CD8-positive, alpha-beta T cell (primary cell): ENCODE measurements at regions of chr19 and their contacts with region 1.

Region 1: DNA sequence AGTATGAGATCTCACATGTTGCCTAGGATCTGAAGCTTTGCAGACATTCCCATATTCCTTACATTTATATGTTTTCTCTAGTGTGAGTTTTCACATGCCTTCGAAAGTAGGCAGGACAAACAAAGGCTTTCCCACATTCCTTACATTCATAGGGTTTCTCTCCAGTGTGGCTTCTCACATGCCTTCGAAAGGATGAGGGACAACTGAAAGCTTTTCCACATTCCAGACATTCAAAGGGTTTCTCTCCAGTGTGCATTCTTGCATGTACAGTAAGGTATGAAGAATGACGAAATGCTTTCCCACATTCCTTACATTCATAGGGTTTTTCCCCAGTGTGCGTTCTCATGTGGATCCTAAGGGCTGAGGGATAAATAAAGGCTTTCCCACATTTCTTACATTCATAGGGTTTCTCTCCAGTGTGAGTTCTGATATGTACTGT is 14.2 kb downstream of the ZNF699 start:
- DNase-seq: no peak
- ATAC-seq: no peak
- H3K4me3 ChIP-seq: peak overlapping the region in 1 of 2 experiments; percentile 18
- H3K4me3 Mint-ChIP-seq: no peak overlapping the region
- H3K27ac ChIP-seq: no peak overlapping the region
- H3K27ac Mint-ChIP-seq: no peak overlapping the region
- H3K4me1 ChIP-seq: no peaks in the 10 kb centered on the region
- H3K4me1 Mint-ChIP-seq: peaks cover 7% of the 10 kb centered on the region
- H3K27me3 ChIP-seq: no peaks in the 10 kb centered on the region
- H3K27me3 Mint-ChIP-seq: no peaks in the 10 kb centered on the region
- CTCF ChIP-seq: no peak

Region 2: DNA sequence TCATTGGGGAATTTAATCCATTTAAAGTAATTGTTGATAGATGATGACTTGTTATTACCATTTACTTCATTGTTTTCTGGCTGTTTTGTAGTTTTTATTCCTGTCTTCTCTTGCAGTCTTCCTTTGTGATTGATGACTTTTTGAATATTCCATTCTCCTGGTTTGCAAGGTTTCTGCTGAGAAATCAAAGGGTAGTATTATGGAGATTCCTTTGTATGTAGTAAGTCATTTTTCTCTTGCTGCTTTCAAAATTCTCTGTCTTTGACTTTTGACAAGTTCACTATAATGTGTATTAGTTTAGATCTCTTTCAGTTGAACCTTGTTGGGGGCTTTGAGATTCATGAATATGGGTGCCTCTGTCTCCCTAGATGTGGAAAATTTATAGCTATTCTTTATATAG is 34.6 kb after region 1 on chr19:
- CTCF ChIA-PET with region 1: no interaction called
- POLR2A ChIA-PET with region 1: no interaction called
- intact Hi-C with region 1: loop called in 1 of 2 experiments (anchors 5 kb)
- DNase-seq: no peak
- ATAC-seq: no peak
- H3K4me3 ChIP-seq: no peak overlapping the region
- H3K4me3 Mint-ChIP-seq: no peak overlapping the region
- H3K27ac ChIP-seq: no peak overlapping the region
- H3K27ac Mint-ChIP-seq: no peak overlapping the region
- H3K4me1 ChIP-seq: peaks cover 2% of the 10 kb centered on the region
- H3K4me1 Mint-ChIP-seq: peaks cover 17% of the 10 kb centered on the region
- H3K27me3 ChIP-seq: no peaks in the 10 kb centered on the region
- H3K27me3 Mint-ChIP-seq: no peaks in the 10 kb centered on the region
- CTCF ChIP-seq: no peak

Region 3: DNA sequence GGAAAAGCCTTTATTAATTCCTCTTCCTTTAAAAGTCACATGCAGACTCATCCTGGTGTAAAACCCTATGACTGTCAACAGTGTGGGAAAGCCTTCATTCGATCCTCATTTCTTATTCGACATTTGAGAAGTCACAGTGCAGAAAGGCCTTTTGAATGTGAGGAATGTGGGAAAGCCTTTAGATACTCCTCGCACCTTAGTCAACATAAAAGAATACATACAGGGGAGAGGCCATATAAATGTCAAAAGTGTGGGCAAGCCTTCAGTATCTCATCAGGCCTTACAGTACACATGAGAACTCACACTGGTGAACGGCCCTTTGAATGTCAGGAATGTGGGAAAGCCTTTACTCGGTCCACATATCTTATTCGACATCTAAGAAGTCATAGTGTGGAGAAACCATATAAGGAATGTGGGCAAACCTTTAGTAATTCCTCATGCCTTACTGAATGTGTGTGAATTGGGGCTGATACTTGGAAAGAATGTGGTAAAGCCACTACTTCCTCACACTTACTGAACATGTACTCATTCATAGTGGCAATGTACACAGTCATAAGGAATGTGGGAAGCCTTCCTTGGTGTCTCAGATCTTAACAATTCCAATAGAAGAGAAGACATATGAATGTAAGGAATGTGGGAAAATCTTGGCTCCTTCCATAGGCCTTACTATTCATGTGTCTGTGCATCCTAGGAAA is 47.3 kb after region 1 on chr19:
- CTCF ChIA-PET with region 1: no interaction called
- POLR2A ChIA-PET with region 1: no interaction called
- intact Hi-C with region 1: loop called in 1 of 2 experiments (anchors 10 kb)
- DNase-seq: no peak
- ATAC-seq: no peak
- H3K4me3 ChIP-seq: peak overlapping the region in 1 of 2 experiments; percentile 11
- H3K4me3 Mint-ChIP-seq: no peak overlapping the region
- H3K27ac ChIP-seq: no peak overlapping the region
- H3K27ac Mint-ChIP-seq: no peak overlapping the region
- H3K4me1 ChIP-seq: no peaks in the 10 kb centered on the region
- H3K4me1 Mint-ChIP-seq: no peaks in the 10 kb centered on the region
- H3K27me3 ChIP-seq: no peaks in the 10 kb centered on the region
- H3K27me3 Mint-ChIP-seq: no peaks in the 10 kb centered on the region
- CTCF ChIP-seq: no peak